ENCODE measurements at regions of chr19 and their contacts with region 1.

Region 1: DNA sequence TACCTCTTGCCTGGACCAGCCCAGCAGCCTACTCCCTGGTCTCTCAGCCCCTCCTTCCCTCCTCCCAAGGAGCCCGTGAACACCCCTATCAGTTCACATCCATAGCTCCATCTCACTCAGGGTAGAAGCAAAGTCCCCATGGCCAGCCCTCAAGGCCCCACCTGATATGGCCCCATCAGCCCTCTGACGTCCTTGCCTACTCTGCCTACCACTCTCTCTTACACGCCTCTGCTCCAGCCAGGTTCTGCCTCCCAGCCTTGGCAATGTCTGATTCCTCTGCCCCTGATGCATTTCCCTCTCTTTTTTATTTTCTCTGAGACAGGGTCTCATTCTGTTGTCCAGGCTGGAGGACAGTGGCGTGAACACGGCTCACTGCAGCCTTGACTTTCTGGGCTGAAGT is 7.9 kb upstream of the SERTAD3 start:
- DNase-seq: no peak
- H3K4me3 ChIP-seq: no peak overlapping the region
- H3K27ac ChIP-seq: no peak overlapping the region
- H3K4me1 ChIP-seq: no peaks in the 10 kb centered on the region
- H3K27me3 ChIP-seq: no peaks in the 10 kb centered on the region
- CTCF ChIP-seq: no peak
- EP300 ChIP-seq: no peak
- RAD21 ChIP-seq: no peak

Region 2: GRCh38 chr19:40465557-40466150 is 13.6 kb after region 1 on chr19 and contains the start of gene BLVRB:
- CTCF ChIA-PET with region 1: interaction called, 49 read pairs
- POLR2A ChIA-PET with region 1: interaction called, 3 read pairs
- DNase-seq: peak; percentile 97
- H3K4me3 ChIP-seq: peak within 1 kb of the TSS; percentile 61 to 79
- H3K27ac ChIP-seq: peak within 1 kb of the TSS; percentile 3 to 79; a peak in 3 of 4 replicates
- H3K4me1 ChIP-seq: peaks cover 5 to 17% of the 10 kb centered on the region in 2 experiments; a peak in 3 of 4 replicates
- H3K27me3 ChIP-seq: no peaks in the 10 kb centered on the region
- CTCF ChIP-seq: no peak
- EP300 ChIP-seq: no peak
- RAD21 ChIP-seq: no peak
- polyA plus RNA-seq, gene BLVRB: 69.7 and 85.9 TPM in 2 replicates